Activated CD4-positive, alpha-beta memory T cell treated with anti-CD3 and anti-CD28 coated beads for 36 hours (primary cell): ENCODE measurements at regions of chr15 and their contacts with region 1.

Region 1: DNA sequence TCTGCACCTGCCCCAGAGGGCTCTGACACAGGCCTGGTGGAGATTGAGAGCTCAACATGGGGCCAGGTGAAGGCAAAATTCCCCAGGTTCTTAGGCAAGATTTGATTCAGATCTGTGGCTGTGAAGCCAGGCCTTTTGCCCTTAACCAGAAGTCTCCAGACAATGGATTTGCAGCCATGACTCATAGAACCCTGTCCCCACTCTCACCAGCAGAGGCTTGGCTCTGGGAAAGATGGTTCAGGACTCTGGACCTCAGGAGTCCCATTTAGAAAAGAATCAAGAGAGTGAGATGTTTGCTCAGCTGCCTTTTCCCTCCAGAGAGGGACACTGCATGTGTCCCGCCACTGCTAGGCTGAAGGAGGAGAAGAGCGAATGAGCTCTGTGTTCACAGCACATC is 361.4 kb upstream of the ICE2 start:
- DNase-seq: peak; percentile 36
- H3K4me3 Mint-ChIP-seq: peak overlapping the region; percentile 68
- H3K27ac Mint-ChIP-seq: peak overlapping the region; percentile 74
- H3K4me1 Mint-ChIP-seq: peaks cover 74% of the 10 kb centered on the region
- H3K27me3 Mint-ChIP-seq: peaks cover 3% of the 10 kb centered on the region

Region 2: DNA sequence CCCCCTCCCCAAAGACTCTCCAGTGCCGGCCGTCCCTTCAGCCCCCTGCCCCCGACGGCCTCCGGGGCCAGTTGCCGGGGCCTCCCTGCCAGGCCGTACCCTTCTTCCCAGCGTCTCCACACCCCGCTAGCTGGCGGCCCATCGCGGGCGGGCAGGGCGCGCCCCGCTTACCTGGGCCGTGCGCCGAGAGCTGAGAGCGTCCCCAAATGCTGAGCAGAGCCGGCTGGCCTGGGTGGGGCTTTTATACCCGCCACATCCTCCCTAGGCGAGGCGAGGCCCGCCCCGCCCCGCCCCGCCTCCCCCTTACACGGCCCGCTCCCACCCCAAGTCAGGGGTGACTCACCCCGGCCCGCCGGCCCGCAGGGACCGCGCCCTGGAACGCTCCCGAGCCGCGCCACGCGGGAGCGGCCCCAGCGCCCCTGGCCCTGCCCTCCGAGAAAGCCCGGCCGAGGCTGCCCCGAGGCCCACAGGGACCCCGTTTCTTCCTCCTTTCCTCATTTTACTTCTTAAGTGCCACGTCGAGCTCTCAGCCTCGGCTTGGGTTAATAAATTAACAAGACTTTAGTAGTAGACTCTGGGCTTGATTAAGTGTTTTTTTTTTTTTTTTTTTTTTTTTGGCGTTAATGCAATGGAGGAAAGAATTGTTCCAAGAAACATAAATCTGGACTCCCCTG is 442.4 kb before region 1 on chr15 and contains the start of gene ANXA2:
- CTCF ChIA-PET with region 1: no interaction called
- POLR2A ChIA-PET with region 1: no interaction called
- intact Hi-C with region 1: loop called (anchors 5 kb)
- DNase-seq: peak; percentile 89
- H3K4me3 Mint-ChIP-seq: peak within 1 kb of the TSS; percentile 93
- H3K27ac Mint-ChIP-seq: peak within 1 kb of the TSS; percentile 91
- H3K4me1 Mint-ChIP-seq: peaks cover 45% of the 10 kb centered on the region
- H3K27me3 Mint-ChIP-seq: peaks cover 2% of the 10 kb centered on the region
- total RNA-seq, gene ANXA2: 131 to 132 TPM

Region 3: DNA sequence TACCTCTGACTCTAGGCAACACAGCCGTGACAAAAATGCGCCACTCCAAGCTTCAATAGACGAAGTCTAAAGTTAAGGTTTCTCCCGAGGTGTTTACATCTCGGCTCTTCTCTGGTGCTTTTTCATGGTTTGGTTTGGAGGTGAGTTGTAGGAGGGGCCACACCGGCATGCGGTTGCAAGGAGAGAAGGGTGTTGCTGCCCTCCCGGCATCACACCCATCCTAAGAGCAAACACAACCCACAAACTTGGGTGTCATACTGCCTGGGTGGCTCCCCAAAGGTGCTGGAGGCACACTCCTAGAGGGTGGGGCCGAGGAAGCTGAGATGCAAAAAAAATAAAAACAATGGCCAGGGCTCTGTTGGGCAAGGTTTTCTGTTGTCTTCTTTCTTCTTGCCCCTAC is 136.2 kb before region 1 on chr15:
- CTCF ChIA-PET with region 1: interaction called, 3 read pairs
- POLR2A ChIA-PET with region 1: interaction called, 3 read pairs
- intact Hi-C with region 1: loop called (anchors 2 kb)
- DNase-seq: peak; percentile 66
- H3K4me3 Mint-ChIP-seq: peak overlapping the region; percentile 45
- H3K27ac Mint-ChIP-seq: peak overlapping the region; percentile 57
- H3K4me1 Mint-ChIP-seq: peaks cover 77% of the 10 kb centered on the region
- H3K27me3 Mint-ChIP-seq: no peaks in the 10 kb centered on the region

Region 4: DNA sequence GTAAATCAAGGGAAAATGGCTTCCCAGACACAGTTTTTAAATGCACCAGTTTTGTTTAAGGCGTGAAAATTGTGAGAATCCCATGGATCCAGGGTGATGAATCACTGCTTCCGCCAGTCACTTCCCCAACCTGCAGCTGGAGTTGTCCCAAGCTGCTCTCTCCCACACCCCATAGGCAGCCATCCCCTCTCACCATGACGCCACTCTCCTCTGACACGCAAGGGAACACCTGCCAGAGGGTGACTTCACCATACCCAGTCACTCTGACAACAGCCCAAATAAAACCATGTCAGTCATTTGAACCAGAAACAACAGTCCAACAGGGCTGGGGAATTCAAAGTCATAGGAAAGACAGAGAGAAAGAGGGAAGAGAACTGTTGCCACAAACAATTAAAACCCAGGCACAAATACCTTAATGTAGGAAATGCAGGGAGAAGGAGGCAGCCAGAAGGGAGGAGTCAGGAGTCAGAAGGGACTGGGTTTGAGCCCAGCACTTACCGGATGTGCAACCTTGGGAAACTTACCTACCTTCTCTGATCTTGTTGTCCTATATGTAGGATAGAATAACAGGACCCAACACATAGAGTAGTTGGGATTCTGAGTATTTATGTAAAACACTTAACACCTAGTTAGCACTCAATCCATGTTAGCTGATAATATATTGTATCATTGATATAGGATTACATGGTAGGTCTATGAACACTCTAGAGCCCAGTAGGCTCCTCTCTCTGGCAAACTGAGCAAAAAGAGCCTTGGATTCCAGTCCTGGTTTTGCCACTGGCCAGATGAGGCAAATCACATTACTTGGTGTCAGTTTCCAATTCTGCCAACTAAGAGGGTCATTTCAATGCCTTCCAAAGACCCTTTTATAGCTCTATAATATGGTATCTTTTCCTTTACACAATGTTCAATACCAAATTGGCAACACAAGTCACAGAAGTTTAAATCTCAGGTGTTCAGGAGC is 35.0 kb before region 1 on chr15:
- CTCF ChIA-PET with region 1: interaction called, 4 read pairs
- POLR2A ChIA-PET with region 1: interaction called, 5 read pairs
- intact Hi-C with region 1: loop called (anchors 1 kb)
- DNase-seq: no peak
- H3K4me3 Mint-ChIP-seq: no peak overlapping the region
- H3K27ac Mint-ChIP-seq: no peak overlapping the region
- H3K4me1 Mint-ChIP-seq: peaks cover 83% of the 10 kb centered on the region
- H3K27me3 Mint-ChIP-seq: no peaks in the 10 kb centered on the region

Region 5: GRCh38 chr15:61051569-61052031 is 211.3 kb after region 1 on chr15:
- CTCF ChIA-PET with region 1: no interaction called
- POLR2A ChIA-PET with region 1: no interaction called
- intact Hi-C with region 1: loop called (anchors 10 kb)
- DNase-seq: no peak
- H3K4me3 Mint-ChIP-seq: no peak overlapping the region
- H3K27ac Mint-ChIP-seq: no peak overlapping the region
- H3K4me1 Mint-ChIP-seq: no peaks in the 10 kb centered on the region
- H3K27me3 Mint-ChIP-seq: peaks cover 11% of the 10 kb centered on the region